OCI-LY7 (cell line): ENCODE measurements at regions of chr12 and their contacts with region 1.

Region 1: GRCh38 chr12:95473884-95474659 is at the start of gene METAP2:
- DNase-seq: peak; percentile 95
- H3K4me3 ChIP-seq: peak within 1 kb of the TSS; percentile 97
- H3K27ac ChIP-seq: peak within 1 kb of the TSS; percentile 80
- H3K4me1 ChIP-seq: peaks cover 48% of the 10 kb centered on the region
- CTCF ChIP-seq: no peak
- total RNA-seq, gene METAP2: 90.3 and 102 TPM in 2 replicates

Region 2: GRCh38 chr12:95217377-95218149 is 256.5 kb before region 1 on chr12 and contains the starts of genes FGD6 and VEZT:
- CTCF ChIA-PET with region 1: no interaction called
- POLR2A ChIA-PET with region 1: interaction called, 3 read pairs
- intact Hi-C with region 1: loop called (anchors 2 kb)
- DNase-seq: peak; percentile 100
- H3K4me3 ChIP-seq: peak within 1 kb of the TSS; percentile 85
- H3K27ac ChIP-seq: peak within 1 kb of the TSS; percentile 82
- H3K4me1 ChIP-seq: peaks cover 43% of the 10 kb centered on the region
- CTCF ChIP-seq: peak; percentile 76
- total RNA-seq, gene FGD6: 5.6 and 7.3 TPM in 2 replicates
- total RNA-seq, gene VEZT: 52.5 and 57.7 TPM in 2 replicates

Region 3: GRCh38 chr12:95351748-95352147 is 122.3 kb before region 1 on chr12:
- CTCF ChIA-PET with region 1: no interaction called
- POLR2A ChIA-PET with region 1: interaction called, 20 read pairs
- intact Hi-C with region 1: no loop called
- DNase-seq: no peak
- H3K4me3 ChIP-seq: no peak overlapping the region
- H3K27ac ChIP-seq: peak overlapping the region; percentile 63
- H3K4me1 ChIP-seq: peaks cover 62% of the 10 kb centered on the region
- CTCF ChIP-seq: no peak

Region 4: GRCh38 chr12:95440401-95440800 is 33.7 kb before region 1 on chr12:
- CTCF ChIA-PET with region 1: no interaction called
- POLR2A ChIA-PET with region 1: interaction called, 32 read pairs
- intact Hi-C with region 1: loop called (anchors 1 kb)
- DNase-seq: peak; percentile 33
- H3K4me3 ChIP-seq: peak overlapping the region; percentile 20
- H3K27ac ChIP-seq: peak overlapping the region; percentile 93
- H3K4me1 ChIP-seq: peaks cover 62% of the 10 kb centered on the region
- CTCF ChIP-seq: no peak

Region 5: GRCh38 chr12:95484524-95484923 is 10.5 kb after region 1 on chr12:
- CTCF ChIA-PET with region 1: no interaction called
- POLR2A ChIA-PET with region 1: interaction called, 14 read pairs
- intact Hi-C with region 1: no loop called
- DNase-seq: no peak
- H3K4me3 ChIP-seq: no peak overlapping the region
- H3K27ac ChIP-seq: no peak overlapping the region
- H3K4me1 ChIP-seq: peaks cover 16% of the 10 kb centered on the region
- CTCF ChIP-seq: no peak